ENCODE measurements at regions of chr1 and their contacts with region 1.

Region 1: GRCh38 chr1:97901017-97901658 is 19.7 kb downstream of the DPYD start:
- DNase-seq: no peak
- ATAC-seq: no peak
- H3K4me3 Mint-ChIP-seq: no peak overlapping the region
- H3K27ac Mint-ChIP-seq: no peak overlapping the region
- H3K4me1 Mint-ChIP-seq: peaks cover 4% of the 10 kb centered on the region
- H3K27me3 Mint-ChIP-seq: no peaks in the 10 kb centered on the region
- CTCF ChIP-seq: no peak

Region 2: GRCh38 chr1:97911266-97912215 is 10.4 kb after region 1 on chr1:
- CTCF ChIA-PET with region 1: no interaction called
- POLR2A ChIA-PET with region 1: no interaction called
- intact Hi-C with region 1: loop called (anchors 2 kb)
- DNase-seq: no peak
- ATAC-seq: no peak
- H3K4me3 Mint-ChIP-seq: no peak overlapping the region
- H3K27ac Mint-ChIP-seq: no peak overlapping the region
- H3K4me1 Mint-ChIP-seq: peaks cover 11% of the 10 kb centered on the region
- H3K27me3 Mint-ChIP-seq: no peaks in the 10 kb centered on the region
- CTCF ChIP-seq: no peak

Measured in activated B cell treated with CpG ODN at 0.5 μM for 24 hours (primary cell).